ENCODE measurements at regions of chr2 and their contacts with region 1.

Region 1: GRCh38 chr2:10911261-10912075 is at the start of gene KCNF1:
- DNase-seq: peak; percentile 68
- ATAC-seq: peak; percentile 59
- H3K4me3 ChIP-seq: peak within 1 kb of the TSS; percentile 27 to 59 (median 39); a peak in 4 of 6 replicates
- H3K27ac ChIP-seq: no peak within 1 kb of the TSS
- H3K4me1 ChIP-seq: peaks cover 9% of the 10 kb centered on the region
- H3K27me3 ChIP-seq: peaks cover 10 to 72% of the 10 kb centered on the region in 2 experiments
- CTCF ChIP-seq: no peak; the same call in none of the 2 replicates
- EP300 ChIP-seq: no peak
- POLR2A ChIP-seq: no peak
- RAD21 ChIP-seq: peak; percentile 32; the same call in 1 of the 2 replicates
- total RNA-seq, gene KCNF1: 0.09 and 0.15 TPM in 2 replicates

Region 2: DNA sequence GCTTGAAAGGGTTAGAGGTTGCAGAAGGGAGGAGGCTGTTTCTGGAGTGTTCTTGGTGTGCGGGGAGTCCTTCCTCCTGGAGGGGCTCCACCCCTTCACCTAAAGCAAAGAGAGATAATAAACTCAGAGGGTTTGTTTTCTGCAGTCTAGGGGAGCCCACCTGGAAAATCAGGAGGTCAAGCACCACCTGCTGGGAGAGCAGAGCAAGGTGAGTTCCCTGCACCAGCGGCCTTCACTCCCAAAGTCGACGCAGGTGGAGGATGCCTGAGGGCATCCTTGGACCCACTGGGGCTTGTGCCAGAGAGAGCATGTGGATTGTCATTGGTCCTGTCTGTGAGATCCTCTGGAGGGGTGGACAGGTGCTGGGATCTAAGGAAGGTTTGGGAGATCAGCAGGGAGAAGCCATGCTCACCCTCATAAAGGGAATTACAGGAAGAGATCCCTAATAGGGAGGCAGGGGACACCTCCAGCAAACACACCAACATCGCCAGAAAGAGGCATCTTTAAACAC is 117.0 kb after region 1 on chr2:
- CTCF ChIA-PET with region 1: interaction called, 3 read pairs
- POLR2A ChIA-PET with region 1: no interaction called
- in situ Hi-C with region 1: no loop called
- intact Hi-C with region 1: loop called (anchors 5 kb)
- DNase-seq: no peak
- ATAC-seq: peak; percentile 80
- H3K4me3 ChIP-seq: no peak overlapping the region
- H3K27ac ChIP-seq: no peak overlapping the region
- H3K4me1 ChIP-seq: no peaks in the 10 kb centered on the region
- H3K27me3 ChIP-seq: peaks cover 5 to 33% of the 10 kb centered on the region in 2 experiments; a peak in 4 of 5 replicates
- CTCF ChIP-seq: peak; percentile 60
- EP300 ChIP-seq: no peak
- POLR2A ChIP-seq: no peak
- RAD21 ChIP-seq: no peak

Region 3: DNA sequence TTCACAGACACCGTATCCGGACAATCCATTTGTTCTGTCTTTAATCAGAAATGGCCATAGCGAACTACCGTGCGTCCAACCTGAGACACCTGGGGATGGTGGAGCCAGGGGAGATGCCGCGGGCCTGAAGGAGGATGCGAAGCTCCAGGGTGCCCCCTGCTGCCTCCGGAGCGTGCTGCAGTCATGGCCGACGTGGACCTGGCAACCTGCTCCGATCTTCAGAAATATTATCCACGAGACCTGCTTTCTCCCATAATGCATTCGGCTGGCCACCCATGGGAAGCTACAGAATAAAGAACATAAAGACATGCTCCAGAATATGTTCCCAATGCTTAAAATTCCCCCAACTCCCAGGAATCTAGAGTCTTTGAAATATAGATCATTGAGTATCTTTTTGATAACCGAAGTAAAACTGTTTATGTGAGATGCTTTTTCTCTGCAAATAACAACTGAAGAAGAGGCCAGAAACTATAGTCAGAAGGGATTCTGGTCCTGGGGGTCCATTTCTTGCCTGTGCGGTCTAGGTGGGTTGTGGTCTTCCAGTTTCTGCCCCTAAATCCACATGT is 213.1 kb after region 1 on chr2:
- CTCF ChIA-PET with region 1: no interaction called
- POLR2A ChIA-PET with region 1: no interaction called
- in situ Hi-C with region 1: loop called (anchors 10 kb)
- intact Hi-C with region 1: loop called (anchors 10 kb)
- DNase-seq: peak; percentile 43
- ATAC-seq: peak; percentile 80
- H3K4me3 ChIP-seq: peak overlapping the region in 1 of 3 experiments; percentile 0; a peak in 1 of 6 replicates
- H3K27ac ChIP-seq: no peak overlapping the region
- H3K4me1 ChIP-seq: peaks cover 18% of the 10 kb centered on the region
- H3K27me3 ChIP-seq: peaks cover 20 to 67% of the 10 kb centered on the region in 2 experiments
- CTCF ChIP-seq: peak; percentile 96
- EP300 ChIP-seq: no peak
- POLR2A ChIP-seq: no peak
- RAD21 ChIP-seq: peak; percentile 90